ENCODE measurements at regions of chr3 and their contacts with region 1.

Region 1: DNA sequence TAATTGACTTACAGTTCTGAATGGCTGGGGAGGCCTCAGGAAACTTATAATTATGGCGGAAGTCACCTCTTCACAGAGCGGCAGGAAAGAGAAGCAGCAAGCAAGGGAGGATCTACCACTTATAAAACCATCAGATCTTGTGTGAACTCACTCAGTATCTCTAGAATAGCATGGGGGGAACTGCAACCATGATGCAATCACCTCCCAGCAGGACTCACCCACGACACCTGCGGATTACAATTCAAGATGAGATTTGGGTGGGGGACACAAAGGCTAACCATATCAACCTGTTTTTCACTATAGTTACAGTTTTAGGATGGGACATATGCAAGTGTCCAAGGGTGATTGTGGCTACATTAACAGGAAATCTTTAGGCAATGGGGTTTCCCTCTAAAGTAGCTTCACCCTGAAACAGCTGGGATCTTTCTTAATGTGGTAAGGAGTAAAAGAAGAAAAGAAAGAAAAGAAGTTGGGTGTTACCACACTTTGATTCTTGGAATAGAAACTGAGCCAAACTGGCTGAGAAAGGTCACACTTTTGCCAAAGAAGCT is 453.8 kb downstream of the OTOL1 start:
- DNase-seq: peak; percentile 73
- H3K4me3 ChIP-seq: no peak overlapping the region
- H3K27ac ChIP-seq: peak overlapping the region; percentile 65
- H3K4me1 ChIP-seq: peaks cover 41% of the 10 kb centered on the region
- H3K27me3 ChIP-seq: no peaks in the 10 kb centered on the region
- CTCF ChIP-seq: no peak

Region 2: DNA sequence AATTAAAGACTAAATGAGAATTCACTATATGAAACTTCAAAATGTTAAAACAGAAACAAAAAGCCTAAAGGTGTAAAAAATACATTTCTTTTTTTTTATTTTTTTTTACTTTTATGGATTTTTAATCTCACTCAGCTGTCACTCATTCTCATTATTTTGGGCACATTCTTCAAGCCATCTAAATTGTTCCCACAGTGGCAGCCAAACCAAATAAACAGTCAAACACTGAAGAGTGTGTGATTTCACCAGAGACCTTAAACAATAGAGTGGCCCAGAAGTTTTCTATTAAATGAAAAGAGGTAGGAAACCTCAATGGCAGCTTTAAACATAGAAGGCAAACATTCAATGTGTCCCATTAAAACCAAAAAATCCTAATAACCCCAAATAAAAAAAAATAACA is 162.3 kb after region 1 on chr3:
- CTCF ChIA-PET with region 1: no interaction called
- POLR2A ChIA-PET with region 1: no interaction called
- intact Hi-C with region 1: loop called (anchors 1 kb)
- DNase-seq: peak; percentile 57
- H3K4me3 ChIP-seq: no peak overlapping the region
- H3K27ac ChIP-seq: peak overlapping the region; percentile 45
- H3K4me1 ChIP-seq: peaks cover 43% of the 10 kb centered on the region
- H3K27me3 ChIP-seq: no peaks in the 10 kb centered on the region
- CTCF ChIP-seq: no peak